Panc1 (cell line): ENCODE measurements at regions of chr2 and their contacts with region 1.

Region 1: DNA sequence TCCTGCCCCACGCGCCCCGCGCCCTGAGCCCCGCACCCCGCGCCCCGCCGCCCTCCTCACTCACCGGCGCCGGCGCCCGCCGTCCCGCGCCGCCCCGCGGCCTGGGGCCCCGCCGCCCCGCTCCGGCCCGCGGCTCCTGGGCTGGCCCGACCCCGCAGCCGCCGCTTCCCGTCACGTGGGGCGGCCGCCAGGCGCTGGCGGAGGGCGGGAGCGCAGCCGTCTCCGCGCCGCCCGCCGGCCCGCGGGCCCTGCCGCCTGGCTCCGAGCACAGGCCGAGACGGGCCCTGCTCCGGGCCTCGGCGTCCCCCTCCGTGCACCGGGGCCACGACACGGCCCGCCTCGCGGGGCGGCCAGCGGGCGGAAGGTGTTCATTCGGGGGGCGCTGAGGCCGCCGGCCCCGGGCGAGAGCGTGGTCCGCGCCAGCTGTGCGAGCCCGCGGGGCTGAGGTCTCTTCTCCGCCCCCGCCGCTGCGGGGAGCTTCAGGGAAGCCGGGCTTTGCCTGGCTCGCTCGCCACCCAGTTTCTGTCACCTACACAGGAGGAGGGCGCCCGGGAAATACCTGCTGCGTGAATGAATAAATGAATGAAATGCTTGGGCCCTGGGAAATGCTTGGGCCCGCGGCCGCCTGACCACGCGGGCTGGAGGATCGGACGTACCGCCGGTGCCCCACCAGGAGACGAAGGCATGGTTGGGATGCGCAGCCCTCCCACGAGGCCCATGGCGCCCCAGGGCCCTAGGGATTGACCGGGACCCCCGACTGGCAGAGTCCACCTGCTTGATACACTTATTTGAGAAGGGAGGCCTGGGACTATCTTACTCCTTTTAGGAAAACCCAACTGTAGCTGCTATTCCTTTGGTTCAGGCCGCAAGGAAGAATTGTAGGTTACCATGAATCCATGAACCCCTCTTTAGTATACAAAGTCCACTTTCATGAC is at the start of gene TGFBRAP1:
- DNase-seq: no peak
- ATAC-seq: peak; percentile 90
- H3K4me3 ChIP-seq: peak within 1 kb of the TSS; percentile 66 to 87
- H3K27ac ChIP-seq: peak within 1 kb of the TSS; percentile 86
- H3K4me1 ChIP-seq: peaks cover 34% of the 10 kb centered on the region
- H3K27me3 ChIP-seq: no peaks in the 10 kb centered on the region
- CTCF ChIP-seq: no peak; the same call in 1 of the 2 replicates
- total RNA-seq, gene TGFBRAP1: 32.7 TPM

Region 2: GRCh38 chr2:105037572-105038382 is 292.1 kb before region 1 on chr2 and contains the start of gene MRPS9:
- CTCF ChIA-PET with region 1: no interaction called
- POLR2A ChIA-PET with region 1: interaction called, 15 read pairs
- in situ Hi-C with region 1: no loop called
- intact Hi-C with region 1: no loop called
- DNase-seq: peak; percentile 89
- ATAC-seq: peak; percentile 99
- H3K4me3 ChIP-seq: peak within 1 kb of the TSS; percentile 93 to 96
- H3K27ac ChIP-seq: peak within 1 kb of the TSS; percentile 89
- H3K4me1 ChIP-seq: peaks cover 5% of the 10 kb centered on the region; the same call in 1 of the 2 replicates
- H3K27me3 ChIP-seq: no peaks in the 10 kb centered on the region
- CTCF ChIP-seq: no peak
- total RNA-seq, gene MRPS9: 27.4 TPM